ENCODE measurements at regions of chr2 and their contacts with region 1.

Region 1: GRCh38 chr2:196783431-196784094 is 15.9 kb downstream of the GTF3C3 start:
- DNase-seq: no peak
- H3K4me3 Mint-ChIP-seq: no peak overlapping the region
- H3K27ac Mint-ChIP-seq: peak overlapping the region; percentile 59
- H3K4me1 Mint-ChIP-seq: peaks cover 13% of the 10 kb centered on the region
- H3K27me3 Mint-ChIP-seq: no peaks in the 10 kb centered on the region

Region 2: GRCh38 chr2:196798980-196799379 is 15.4 kb after region 1 on chr2:
- CTCF ChIA-PET with region 1: interaction called, 5 read pairs
- POLR2A ChIA-PET with region 1: interaction called, 12 read pairs
- DNase-seq: no peak
- H3K4me3 Mint-ChIP-seq: peak overlapping the region; percentile 93
- H3K27ac Mint-ChIP-seq: peak overlapping the region; percentile 91
- H3K4me1 Mint-ChIP-seq: peaks cover 31% of the 10 kb centered on the region
- H3K27me3 Mint-ChIP-seq: no peaks in the 10 kb centered on the region

Measured in activated CD4-positive, alpha-beta memory T cell treated with anti-CD3 and anti-CD28 coated beads, Interleukin-2, amount 10 ng/mL, durations not matched to agents 7 days and 5 days (primary cell).